ENCODE measurements at regions of chrX and their contacts with region 1.

Region 1: GRCh38 chrX:108168961-108169740 is 77.6 kb downstream of the ATG4A start:
- DNase-seq: peak in 1 of 2 donors; percentile 67
- H3K4me3 ChIP-seq: no peak overlapping the region
- H3K27ac ChIP-seq: no peak overlapping the region
- H3K4me1 ChIP-seq: no peaks in the 10 kb centered on the region
- H3K27me3 ChIP-seq: no peaks in the 10 kb centered on the region
- CTCF ChIP-seq: no peak
- POLR2A ChIP-seq: no peak

Region 2: DNA sequence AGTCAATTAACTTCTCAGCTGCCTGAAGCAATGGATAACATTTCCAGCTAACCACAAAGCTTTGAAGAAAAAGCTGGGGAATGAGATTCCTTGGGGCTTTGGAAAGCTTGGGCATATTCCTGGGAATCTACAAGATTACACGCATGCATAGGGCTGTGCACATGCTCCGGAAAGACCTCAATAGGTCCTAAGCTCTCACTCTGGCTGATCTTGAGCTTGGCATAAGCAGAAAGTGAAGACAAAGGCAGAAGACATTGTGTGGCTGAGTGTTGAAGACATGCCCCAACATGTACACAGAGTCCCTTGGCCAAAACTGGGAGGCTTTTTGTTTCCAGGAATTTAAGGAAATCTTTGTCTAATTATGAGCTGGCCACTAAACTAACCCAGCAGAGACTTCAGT is 46.4 kb before region 1 on chrX:
- intact Hi-C with region 1: loop called (anchors 2 kb)
- DNase-seq: no peak
- H3K4me3 ChIP-seq: no peak overlapping the region
- H3K27ac ChIP-seq: no peak overlapping the region
- H3K4me1 ChIP-seq: no peaks in the 10 kb centered on the region
- H3K27me3 ChIP-seq: no peaks in the 10 kb centered on the region
- CTCF ChIP-seq: no peak
- POLR2A ChIP-seq: no peak

Region 3: GRCh38 chrX:109696146-109696740 is 1527.1 kb after region 1 on chrX:
- intact Hi-C with region 1: no loop called
- DNase-seq: no peak
- H3K4me3 ChIP-seq: no peak overlapping the region
- H3K27ac ChIP-seq: no peak overlapping the region
- H3K4me1 ChIP-seq: no peaks in the 10 kb centered on the region
- H3K27me3 ChIP-seq: no peaks in the 10 kb centered on the region
- CTCF ChIP-seq: no peak
- POLR2A ChIP-seq: no peak

Measured in vagina (tissue), 2 donors.